HepG2 (cell line): ENCODE measurements at regions of chr21 and their contacts with region 1.

Region 1: GRCh38 chr21:43266534-43266933 is 97.7 kb downstream of the CRYAA start:
- DNase-seq: no peak
- ATAC-seq: no peak
- H3K4me3 ChIP-seq: no peak overlapping the region
- H3K27ac ChIP-seq: no peak overlapping the region
- H3K4me1 ChIP-seq: peaks cover 53% of the 10 kb centered on the region
- H3K27me3 ChIP-seq: no peaks in the 10 kb centered on the region; a peak in 1 of 5 replicates
- CTCF ChIP-seq: no peak
- EP300 ChIP-seq: no peak
- POLR2A ChIP-seq: no peak
- RAD21 ChIP-seq: no peak

Region 2: DNA sequence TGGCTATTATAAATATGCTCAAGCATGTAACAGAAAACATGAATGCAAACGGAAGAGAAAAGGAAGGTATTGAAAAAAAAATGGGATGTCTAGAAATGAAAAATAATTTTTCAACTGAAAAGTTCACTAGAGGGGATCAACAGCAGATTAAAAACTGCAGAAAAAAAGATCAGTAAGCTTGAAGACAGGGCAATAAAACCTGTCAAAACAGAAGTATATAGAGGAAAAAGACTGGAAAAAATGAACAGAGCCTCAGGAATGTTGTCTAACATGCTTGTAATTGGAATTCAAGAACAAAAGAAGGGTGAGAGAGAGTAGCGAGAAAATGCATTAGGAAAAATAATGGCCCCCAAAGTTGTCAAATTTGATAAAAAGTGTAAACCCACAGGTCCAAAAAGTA is 68.2 kb before region 1 on chr21:
- CTCF ChIA-PET with region 1: no interaction called
- POLR2A ChIA-PET with region 1: no interaction called
- in situ Hi-C with region 1: no loop called
- intact Hi-C with region 1: no loop called
- DNase-seq: no peak
- ATAC-seq: no peak
- H3K4me3 ChIP-seq: no peak overlapping the region
- H3K27ac ChIP-seq: no peak overlapping the region
- H3K4me1 ChIP-seq: peaks cover 41% of the 10 kb centered on the region
- H3K27me3 ChIP-seq: no peaks in the 10 kb centered on the region
- CTCF ChIP-seq: no peak
- EP300 ChIP-seq: no peak
- POLR2A ChIP-seq: no peak
- RAD21 ChIP-seq: no peak

Region 3: DNA sequence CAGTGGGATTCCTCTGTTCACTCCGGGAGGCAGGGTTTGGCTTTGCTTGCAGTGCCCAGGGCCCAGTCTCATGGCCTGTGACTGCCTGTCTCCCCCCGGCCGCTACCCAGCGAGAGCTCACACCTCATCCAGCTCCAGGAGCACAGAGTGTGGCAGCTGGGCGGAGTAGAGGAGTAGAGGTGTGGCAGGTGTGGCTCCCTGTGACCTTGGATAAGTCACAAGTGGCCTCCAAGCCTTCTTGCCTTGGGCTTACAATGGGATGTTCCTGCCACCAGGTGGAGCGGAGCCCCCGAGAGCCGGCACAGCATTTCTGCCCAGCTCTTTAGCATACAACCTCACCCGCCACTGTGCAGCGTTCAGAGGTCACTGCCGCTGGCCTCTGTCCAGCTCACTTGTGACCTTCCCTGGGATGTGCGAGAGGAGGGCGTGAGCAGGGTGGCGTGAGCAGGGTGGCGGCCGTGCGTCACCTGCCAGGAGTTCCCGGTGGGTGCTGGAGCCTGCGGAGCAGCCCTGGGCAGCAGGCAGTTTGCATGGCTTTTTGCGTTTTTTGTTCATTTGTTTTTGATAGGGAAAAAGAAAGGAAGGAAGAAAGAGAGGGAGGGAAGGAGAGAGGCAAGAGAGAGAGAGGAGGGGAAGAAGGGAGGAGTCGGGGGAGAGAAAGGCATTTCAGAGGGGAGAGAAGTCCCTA is 55.3 kb before region 1 on chr21:
- CTCF ChIA-PET with region 1: no interaction called
- POLR2A ChIA-PET with region 1: interaction called, 17 read pairs
- in situ Hi-C with region 1: no loop called
- intact Hi-C with region 1: no loop called
- DNase-seq: peak; percentile 90
- ATAC-seq: peak; percentile 92
- H3K4me3 ChIP-seq: peak overlapping the region in 2 of 3 experiments; percentile 36 to 62; a peak in 4 of 6 replicates
- H3K27ac ChIP-seq: peak overlapping the region; percentile 59
- H3K4me1 ChIP-seq: peaks cover 36% of the 10 kb centered on the region
- H3K27me3 ChIP-seq: no peaks in the 10 kb centered on the region
- CTCF ChIP-seq: peak; percentile 97
- EP300 ChIP-seq: peak in 1 of 2 experiments; percentile 42; a peak in 1 of 4 replicates
- POLR2A ChIP-seq: peak in 1 of 2 experiments; percentile 51; a peak in 1 of 4 replicates
- RAD21 ChIP-seq: peak; percentile 95

Region 4: DNA sequence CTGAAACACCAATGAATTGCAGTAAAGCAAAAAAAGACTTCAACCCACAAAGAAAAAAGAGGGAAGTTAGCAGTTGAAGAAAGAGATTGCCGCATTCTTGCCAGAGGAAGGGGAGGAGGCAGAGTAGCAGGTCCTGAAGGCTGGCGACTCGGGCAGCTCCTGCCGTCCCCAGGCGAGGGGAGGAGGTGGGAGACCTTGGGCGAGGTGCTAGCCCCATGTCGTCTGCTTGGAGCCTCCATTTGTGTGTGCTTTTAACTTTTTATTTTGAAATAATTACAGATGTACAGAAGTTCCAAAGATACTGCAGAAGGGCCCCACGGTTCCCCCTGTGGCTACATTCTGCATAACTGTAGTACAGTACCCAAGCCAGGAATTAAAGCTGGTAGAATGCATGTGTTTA is 1093.6 kb after region 1 on chr21:
- CTCF ChIA-PET with region 1: no interaction called
- POLR2A ChIA-PET with region 1: no interaction called
- in situ Hi-C with region 1: no loop called
- intact Hi-C with region 1: no loop called
- DNase-seq: no peak
- ATAC-seq: peak; percentile 56
- H3K4me3 ChIP-seq: no peak overlapping the region
- H3K27ac ChIP-seq: no peak overlapping the region
- H3K4me1 ChIP-seq: peaks cover 6% of the 10 kb centered on the region
- H3K27me3 ChIP-seq: peaks cover 4 to 20% of the 10 kb centered on the region in 2 experiments; a peak in 4 of 5 replicates
- CTCF ChIP-seq: no peak
- EP300 ChIP-seq: no peak
- POLR2A ChIP-seq: no peak
- RAD21 ChIP-seq: no peak